BJ (cell line): ENCODE measurements at regions of chr7 and their contacts with region 1.

Region 1: GRCh38 chr7:92621026-92621540 is 30.9 kb upstream of the FAM133B start:
- DNase-seq: peak; percentile 52
- H3K4me3 ChIP-seq: no peak overlapping the region
- H3K27me3 ChIP-seq: no peaks in the 10 kb centered on the region
- CTCF ChIP-seq: peak; percentile 75

Region 2: DNA sequence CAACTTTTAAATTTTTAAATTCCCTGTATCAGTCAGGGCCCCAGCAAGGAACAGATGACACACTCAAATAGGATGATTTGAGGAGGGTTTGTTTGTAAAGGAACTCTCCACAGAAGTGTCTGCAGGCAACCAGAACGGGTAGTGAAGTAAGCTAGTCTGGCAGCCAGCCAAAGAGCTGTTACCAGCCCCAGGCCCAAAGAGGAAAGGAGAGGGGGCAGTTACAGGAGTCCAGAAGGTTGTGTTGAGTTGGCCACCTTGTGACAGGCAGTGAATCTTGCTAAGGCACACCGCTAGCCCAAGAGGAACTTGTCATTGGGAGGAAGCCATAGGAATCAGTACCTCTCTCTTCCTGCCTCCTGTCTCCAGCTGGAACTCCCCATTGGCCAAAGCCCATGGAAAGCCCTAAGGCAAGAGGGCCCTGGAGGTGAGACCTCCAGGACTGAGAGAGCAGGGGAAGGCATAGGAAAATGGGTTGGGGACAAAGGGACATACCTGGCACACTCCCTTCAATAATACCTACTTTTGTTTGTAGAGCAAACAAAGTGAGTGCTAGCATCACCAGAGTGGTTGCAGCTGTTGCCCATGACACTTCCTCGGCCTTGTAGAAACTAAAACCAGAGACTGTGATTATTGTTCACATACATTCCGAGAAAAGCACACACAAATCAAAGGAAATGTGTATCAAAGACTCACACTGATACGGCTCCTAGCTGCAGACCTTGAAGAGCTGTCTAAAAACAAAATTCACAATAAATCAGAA is 199.2 kb before region 1 on chr7:
- CTCF ChIA-PET with region 1: no interaction called
- POLR2A ChIA-PET with region 1: no interaction called
- DNase-seq: no peak
- H3K4me3 ChIP-seq: no peak overlapping the region
- H3K27me3 ChIP-seq: peaks cover 4% of the 10 kb centered on the region
- CTCF ChIP-seq: no peak

Region 3: GRCh38 chr7:92485267-92485892 is 135.7 kb before region 1 on chr7:
- CTCF ChIA-PET with region 1: no interaction called
- POLR2A ChIA-PET with region 1: no interaction called
- DNase-seq: no peak
- H3K4me3 ChIP-seq: no peak overlapping the region
- H3K27me3 ChIP-seq: no peaks in the 10 kb centered on the region
- CTCF ChIP-seq: no peak

Region 4: DNA sequence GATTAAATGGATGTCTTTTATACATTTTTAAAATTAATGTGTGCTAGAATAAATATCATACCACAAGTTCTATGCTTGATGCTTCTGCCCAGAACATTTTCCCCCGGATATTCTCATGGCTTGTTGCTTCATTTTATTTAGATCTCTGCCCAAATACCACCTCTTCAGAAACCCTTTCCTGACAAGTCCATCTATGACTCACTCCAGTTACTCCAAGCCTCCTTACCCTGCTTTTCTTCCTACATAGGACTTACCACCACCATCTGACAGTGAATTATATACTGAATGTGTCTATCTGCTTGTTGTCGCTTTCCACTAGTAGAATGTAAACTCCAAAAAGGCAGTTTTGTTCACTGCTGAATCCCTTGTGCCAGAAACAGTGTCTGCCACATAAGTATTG is 124.2 kb before region 1 on chr7:
- CTCF ChIA-PET with region 1: no interaction called
- POLR2A ChIA-PET with region 1: no interaction called
- DNase-seq: no peak
- H3K4me3 ChIP-seq: no peak overlapping the region
- H3K27me3 ChIP-seq: no peaks in the 10 kb centered on the region
- CTCF ChIP-seq: no peak

Region 5: GRCh38 chr7:92546856-92547497 is 74.1 kb before region 1 on chr7:
- CTCF ChIA-PET with region 1: no interaction called
- POLR2A ChIA-PET with region 1: no interaction called
- DNase-seq: no peak
- H3K4me3 ChIP-seq: no peak overlapping the region
- H3K27me3 ChIP-seq: no peaks in the 10 kb centered on the region
- CTCF ChIP-seq: no peak

Region 6: DNA sequence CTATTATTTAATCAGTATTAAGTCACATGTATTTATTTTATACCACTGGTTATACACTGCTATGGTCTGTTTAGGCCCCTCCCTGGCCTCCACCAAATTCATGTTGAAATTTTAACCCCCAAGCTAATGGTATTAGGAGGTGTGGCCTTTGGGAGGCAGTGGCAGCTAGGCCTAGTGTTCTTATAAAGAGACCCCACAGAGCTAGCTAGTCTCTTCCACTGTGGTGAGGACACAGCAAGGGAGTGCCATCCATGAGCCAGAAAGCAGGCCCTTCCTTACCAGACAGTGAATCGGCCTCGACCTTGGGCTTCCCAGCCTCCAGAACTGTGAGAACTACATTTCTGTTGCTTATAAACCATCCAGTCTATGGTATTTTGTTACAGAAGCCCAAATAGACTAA is 63.8 kb before region 1 on chr7:
- CTCF ChIA-PET with region 1: no interaction called
- POLR2A ChIA-PET with region 1: interaction called, 10 read pairs
- DNase-seq: no peak
- H3K4me3 ChIP-seq: no peak overlapping the region
- H3K27me3 ChIP-seq: no peaks in the 10 kb centered on the region; the same call in 1 of the 2 replicates
- CTCF ChIP-seq: no peak

Region 7: DNA sequence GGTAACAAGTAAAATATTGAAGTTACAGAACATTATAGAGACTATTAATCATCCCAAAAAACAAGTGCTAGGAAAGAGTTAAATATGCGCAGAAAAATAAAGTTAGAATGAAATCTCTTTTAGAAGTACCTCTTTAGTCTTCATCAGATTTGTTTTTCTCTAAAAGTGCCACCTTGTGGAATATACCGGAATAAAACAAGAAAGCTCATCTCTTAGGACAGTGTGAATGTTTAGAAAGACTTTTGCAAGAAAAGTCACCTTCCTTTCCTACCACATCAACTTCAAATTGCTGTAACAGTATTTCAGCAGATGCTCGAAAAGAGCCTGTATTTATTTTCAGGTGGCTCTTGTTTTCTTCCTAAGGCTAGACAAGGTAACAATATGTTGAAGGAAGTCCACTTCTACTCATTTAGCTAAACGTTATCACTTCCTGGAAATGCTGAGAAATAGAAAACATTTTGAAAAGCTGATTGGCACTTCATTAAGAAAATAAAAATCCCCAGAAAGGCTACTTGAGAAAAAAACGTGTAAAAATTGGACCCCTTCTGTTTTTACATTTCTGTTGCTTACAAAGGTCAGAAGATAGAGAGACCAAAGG is 11.1 kb before region 1 on chr7:
- CTCF ChIA-PET with region 1: interaction called, 22 read pairs
- POLR2A ChIA-PET with region 1: no interaction called
- DNase-seq: no peak
- H3K4me3 ChIP-seq: no peak overlapping the region
- H3K27me3 ChIP-seq: no peaks in the 10 kb centered on the region
- CTCF ChIP-seq: peak; percentile 50